Vagina (tissue), 2 donors: ENCODE measurements at regions of chr2 and their contacts with region 1.

Region 1: DNA sequence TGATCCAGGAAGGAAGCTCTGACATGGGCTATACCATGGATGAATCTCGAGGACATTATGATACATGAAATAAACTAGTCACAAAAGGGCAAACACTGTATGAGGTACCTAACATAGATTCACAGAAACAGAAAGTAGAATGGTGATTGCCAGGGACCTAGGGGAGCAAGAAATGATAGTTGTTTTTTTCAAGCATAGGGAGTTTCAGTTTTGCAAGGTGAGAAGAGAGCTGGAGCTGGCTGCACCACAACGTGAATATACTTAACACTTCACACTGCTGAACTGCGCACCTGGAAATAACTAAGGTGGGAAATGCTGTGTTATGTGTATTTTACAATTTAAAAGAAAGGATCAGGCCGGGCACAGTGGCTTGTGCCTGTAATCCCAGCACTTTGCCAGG is 13.2 kb upstream of the AGAP1 start:
- DNase-seq: no peak
- H3K4me3 ChIP-seq: no peak overlapping the region
- H3K27ac ChIP-seq: no peak overlapping the region
- H3K4me1 ChIP-seq: no peaks in the 10 kb centered on the region
- H3K27me3 ChIP-seq: no peaks in the 10 kb centered on the region
- CTCF ChIP-seq: no peak
- POLR2A ChIP-seq: no peak

Region 2: DNA sequence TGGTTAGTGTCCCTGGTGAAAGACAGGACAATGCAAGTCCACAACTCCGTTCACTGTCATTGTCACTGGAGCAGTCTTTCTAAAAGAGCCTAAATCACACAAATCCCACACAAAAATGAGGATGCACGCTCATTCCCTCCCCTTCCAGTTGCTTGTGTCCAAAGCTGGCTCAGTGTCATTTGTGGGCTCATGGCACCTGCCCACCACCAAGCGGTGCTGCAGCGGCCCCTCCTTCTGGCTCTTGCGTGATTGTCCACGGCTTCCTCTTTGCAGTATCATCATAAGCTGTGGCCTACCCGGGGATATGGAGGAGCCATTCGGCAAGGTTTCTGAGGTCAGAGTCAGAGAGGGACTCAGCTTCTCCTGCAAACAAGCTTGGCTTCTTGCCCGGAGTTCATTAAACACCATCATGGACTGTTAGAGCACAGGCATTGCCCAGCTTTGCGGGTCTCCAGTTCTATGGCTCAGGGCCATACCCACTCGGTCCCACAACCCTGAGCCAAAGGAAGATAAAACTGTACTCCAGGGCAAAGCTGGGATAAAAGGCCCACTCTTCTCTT is 166.2 kb before region 1 on chr2:
- intact Hi-C with region 1: no loop called
- DNase-seq: peak in 1 of 2 donors; percentile 72
- H3K4me3 ChIP-seq: no peak overlapping the region
- H3K27ac ChIP-seq: no peak overlapping the region
- H3K4me1 ChIP-seq: no peaks in the 10 kb centered on the region
- H3K27me3 ChIP-seq: no peaks in the 10 kb centered on the region
- CTCF ChIP-seq: no peak
- POLR2A ChIP-seq: no peak

Region 3: GRCh38 chr2:235535423-235536130 is 55.0 kb after region 1 on chr2:
- intact Hi-C with region 1: loop called (anchors 2 kb)
- DNase-seq: no peak
- H3K4me3 ChIP-seq: no peak overlapping the region
- H3K27ac ChIP-seq: no peak overlapping the region
- H3K4me1 ChIP-seq: peaks cover 9% of the 10 kb centered on the region
- H3K27me3 ChIP-seq: no peaks in the 10 kb centered on the region
- CTCF ChIP-seq: no peak
- POLR2A ChIP-seq: no peak

Region 4: DNA sequence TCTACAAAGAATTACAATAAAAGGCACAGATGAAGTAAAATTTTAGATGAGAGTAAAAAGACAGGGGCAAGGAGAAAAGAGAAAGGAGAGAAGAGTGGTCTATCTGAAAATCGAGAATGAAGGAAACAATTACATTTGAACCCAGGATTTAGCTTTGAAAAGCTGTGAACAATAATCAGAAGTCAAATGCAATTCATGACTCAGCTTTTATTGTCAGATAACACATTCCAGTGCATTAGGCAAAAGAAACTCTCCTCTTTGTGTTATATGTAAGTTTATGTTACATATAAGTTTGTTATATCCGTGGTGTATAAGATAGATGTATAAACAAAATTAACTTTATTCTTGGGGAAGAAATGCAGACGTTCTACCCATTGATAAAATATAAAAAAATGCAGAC is 403.1 kb after region 1 on chr2:
- intact Hi-C with region 1: no loop called
- DNase-seq: no peak
- H3K4me3 ChIP-seq: no peak overlapping the region
- H3K27ac ChIP-seq: no peak overlapping the region
- H3K4me1 ChIP-seq: no peaks in the 10 kb centered on the region
- H3K27me3 ChIP-seq: no peaks in the 10 kb centered on the region
- CTCF ChIP-seq: no peak
- POLR2A ChIP-seq: no peak